ENCODE measurements at regions of chr5 and their contacts with region 1.

Region 1: GRCh38 chr5:132419502-132420468 is 50.3 kb downstream of the SLC22A5 start:
- DNase-seq: no peak
- H3K4me3 ChIP-seq: no peak overlapping the region
- H3K27me3 ChIP-seq: no peaks in the 10 kb centered on the region
- CTCF ChIP-seq: peak; percentile 85

Region 2: DNA sequence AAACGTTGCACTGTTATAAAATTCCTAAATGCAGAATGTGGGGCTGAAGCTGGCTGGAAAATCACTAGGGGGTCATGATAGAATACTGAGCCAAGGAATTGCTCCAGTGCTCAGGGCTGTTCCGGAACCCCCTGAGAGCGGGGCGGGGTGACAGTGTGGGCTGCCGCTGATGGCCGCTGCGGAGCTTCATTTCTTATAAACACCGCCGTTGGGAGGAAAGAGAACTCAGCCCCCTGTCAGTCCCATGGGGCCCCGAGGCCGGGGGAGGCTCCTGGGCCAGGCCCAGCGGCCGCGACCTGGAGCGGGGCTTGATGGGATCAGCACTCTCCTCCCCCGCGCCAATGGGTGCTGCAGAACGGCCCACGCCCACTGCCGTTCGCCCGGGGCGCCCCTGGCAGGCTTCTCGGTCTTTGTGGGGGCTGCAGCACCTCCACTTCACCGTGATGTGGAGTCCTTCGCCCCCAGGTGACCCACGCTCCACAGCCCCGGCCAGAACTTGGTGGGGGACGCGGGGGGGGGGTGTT is 75.9 kb after region 1 on chr5:
- CTCF ChIA-PET with region 1: interaction called, 77 read pairs
- POLR2A ChIA-PET with region 1: no interaction called
- DNase-seq: peak; percentile 57
- H3K4me3 ChIP-seq: peak overlapping the region; percentile 59
- H3K27me3 ChIP-seq: no peaks in the 10 kb centered on the region
- CTCF ChIP-seq: peak; percentile 33

Region 3: GRCh38 chr5:132500931-132501630 is 81.3 kb after region 1 on chr5:
- CTCF ChIA-PET with region 1: interaction called, 77 read pairs
- POLR2A ChIA-PET with region 1: interaction called, 3 read pairs
- DNase-seq: no peak
- H3K4me3 ChIP-seq: no peak overlapping the region
- H3K27me3 ChIP-seq: no peaks in the 10 kb centered on the region
- CTCF ChIP-seq: peak; percentile 77

Region 4: DNA sequence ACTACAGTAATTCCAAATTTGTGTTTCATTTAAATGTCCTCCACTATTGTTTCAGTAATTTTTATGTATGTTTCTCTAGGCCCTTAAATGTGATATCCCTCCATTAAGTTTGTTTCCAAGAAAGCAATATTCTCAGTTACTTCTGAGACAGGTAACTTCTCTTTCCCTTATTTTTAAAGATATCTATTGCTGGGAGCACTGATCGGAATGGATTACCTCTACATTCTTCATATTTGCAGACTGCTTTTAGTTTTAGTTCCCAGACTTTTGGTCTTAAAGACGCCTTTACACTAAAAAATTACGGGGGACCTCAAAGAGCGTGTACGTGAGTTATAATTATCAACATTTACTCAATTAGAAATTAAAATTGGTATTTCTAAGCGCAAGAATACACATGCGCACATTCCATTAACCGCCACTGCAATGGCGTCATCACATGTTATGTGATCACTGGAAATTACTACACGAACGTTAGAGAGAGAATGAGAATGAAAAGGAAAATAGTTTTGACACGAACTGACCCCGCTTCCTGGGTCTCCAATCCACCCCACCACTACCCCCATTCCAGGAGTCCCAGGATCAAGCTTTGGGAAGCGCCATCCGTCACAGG is 136.5 kb after region 1 on chr5:
- CTCF ChIA-PET with region 1: no interaction called
- POLR2A ChIA-PET with region 1: no interaction called
- DNase-seq: no peak
- H3K4me3 ChIP-seq: peak overlapping the region; percentile 79
- H3K27me3 ChIP-seq: peaks cover under 1% of the 10 kb centered on the region; the same call in 1 of the 2 replicates
- CTCF ChIP-seq: no peak

Measured in BJ (cell line).